Thyroid gland (tissue), 4 donors: ENCODE measurements at regions of chr13 and their contacts with region 1.

Region 1: GRCh38 chr13:44577236-44578066 is 1.3 kb upstream of the TSC22D1 start:
- DNase-seq: peak; percentile 98
- H3K4me3 ChIP-seq: peak overlapping the region; percentile 67 to 88 (median 74)
- H3K27ac ChIP-seq: peak overlapping the region; percentile 86 to 99 (median 97)
- H3K4me1 ChIP-seq: peaks cover 18 to 21% of the 10 kb centered on the region in 2 donors
- H3K27me3 ChIP-seq: no peaks in the 10 kb centered on the region
- CTCF ChIP-seq: no peak
- POLR2A ChIP-seq: peak in 1 of 2 donors; percentile 79

Region 2: DNA sequence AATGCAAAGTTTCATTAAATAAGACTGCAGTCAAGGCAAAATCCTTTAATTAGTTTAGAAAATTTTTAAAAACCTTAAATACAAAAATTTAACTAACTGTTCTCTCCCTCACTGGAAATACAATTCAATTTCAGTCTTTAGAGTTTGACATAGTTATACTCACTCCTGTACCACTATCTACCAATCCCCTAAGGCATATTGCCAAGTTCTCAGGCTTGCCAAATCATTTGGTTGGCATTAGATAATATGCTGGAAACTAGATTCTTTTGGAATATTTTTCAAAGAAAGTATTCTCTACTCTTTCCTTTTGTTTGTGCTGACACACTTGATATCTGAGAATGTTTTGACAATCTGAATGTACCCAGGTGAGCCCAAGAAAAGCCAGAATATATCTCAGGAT is 78.5 kb before region 1 on chr13:
- intact Hi-C with region 1: loop called (anchors 10 kb)
- DNase-seq: peak; percentile 32 to 48
- H3K4me3 ChIP-seq: no peak overlapping the region
- H3K27ac ChIP-seq: peak overlapping the region in 1 of 3 donors; percentile 34
- H3K4me1 ChIP-seq: peaks cover 8 to 10% of the 10 kb centered on the region in 2 donors
- H3K27me3 ChIP-seq: no peaks in the 10 kb centered on the region
- CTCF ChIP-seq: no peak
- POLR2A ChIP-seq: no peak

Region 3: GRCh38 chr13:44988973-44989817 is 411.7 kb after region 1 on chr13 and contains the starts of genes GPALPP1 and NUFIP1:
- intact Hi-C with region 1: loop called (anchors 10 kb)
- DNase-seq: peak; percentile 92 to 93
- H3K4me3 ChIP-seq: peak within 1 kb of the TSS; percentile 65 to 99 (median 84)
- H3K27ac ChIP-seq: peak within 1 kb of the TSS; percentile 70 to 76 (median 72)
- H3K4me1 ChIP-seq: peaks cover 17 to 28% of the 10 kb centered on the region in 2 donors
- H3K27me3 ChIP-seq: no peaks in the 10 kb centered on the region
- CTCF ChIP-seq: peak in 2 of 6 experiments; percentile 19 to 22
- POLR2A ChIP-seq: peak in 1 of 2 donors; percentile 57
- total RNA-seq, gene GPALPP1: 30.1 to 44.4 (median 35.2) TPM
- total RNA-seq, gene NUFIP1: 3.2 to 4.3 (median 3.5) TPM